ENCODE measurements at regions of chr1 and their contacts with region 1.

Region 1: DNA sequence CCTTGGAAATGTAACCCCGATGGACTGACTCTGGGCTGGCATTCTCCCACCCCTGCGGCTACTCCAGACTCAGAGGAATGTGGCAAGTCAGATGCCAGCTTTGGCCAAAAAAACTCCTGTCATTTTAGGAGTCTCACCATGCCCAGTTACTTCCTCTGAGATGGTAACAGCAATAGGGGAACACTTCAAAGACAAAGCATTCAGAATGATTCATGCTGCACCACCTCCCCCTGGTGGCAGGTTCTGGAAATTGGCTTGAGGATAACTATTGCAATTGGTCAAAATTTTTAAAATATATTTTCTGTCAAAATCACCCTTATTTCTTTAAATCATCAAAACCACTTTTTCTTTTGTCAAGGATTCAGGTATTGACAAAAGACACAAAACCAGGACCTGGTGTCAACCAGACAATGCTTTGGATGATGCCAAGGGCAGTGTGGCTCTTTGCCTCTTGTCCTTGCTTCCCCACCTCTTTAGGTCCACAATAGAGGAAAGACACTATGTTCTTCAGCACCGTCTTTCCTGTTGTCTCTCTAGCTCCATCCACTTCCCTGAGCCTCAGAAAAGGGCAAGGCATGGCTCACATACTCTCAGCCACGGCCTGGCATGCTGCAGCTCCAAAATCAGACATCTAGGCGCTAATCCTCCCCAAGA is 9.9 kb upstream of the CDCA8 start:
- DNase-seq: peak in 3 of 4 donors; percentile 51 to 72 (median 64)
- ATAC-seq: peak; percentile 93
- H3K4me3 ChIP-seq: no peak overlapping the region
- H3K27ac ChIP-seq: no peak overlapping the region
- H3K4me1 ChIP-seq: peaks cover 0 to 6% of the 10 kb centered on the region in 2 donors
- H3K27me3 ChIP-seq: no peaks in the 10 kb centered on the region
- CTCF ChIP-seq: peak; percentile 82 to 86

Region 2: DNA sequence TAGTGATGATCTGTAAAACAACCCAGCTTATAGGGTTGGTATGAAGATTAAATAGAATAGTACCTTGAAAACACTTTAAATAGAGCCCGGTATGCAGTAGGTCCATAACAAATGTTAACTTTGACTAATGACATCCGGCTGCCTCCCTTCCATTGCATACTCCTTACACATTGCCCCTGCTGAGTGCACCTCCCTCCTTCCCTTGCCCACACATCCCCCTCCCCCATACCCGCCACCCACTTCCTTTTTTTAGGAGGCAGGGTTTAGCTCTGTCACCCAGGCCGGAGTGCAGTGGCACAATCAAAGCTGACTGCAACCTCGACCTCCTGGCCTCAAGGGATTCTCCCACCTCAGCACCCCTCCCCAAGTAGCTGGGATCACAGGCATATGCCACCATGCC is 232.5 kb before region 1 on chr1:
- intact Hi-C with region 1: loop called in 1 of 2 experiments (anchors 10 kb)
- DNase-seq: peak in 1 of 4 donors; percentile 51
- ATAC-seq: peak; percentile 11
- H3K4me3 ChIP-seq: no peak overlapping the region
- H3K27ac ChIP-seq: no peak overlapping the region
- H3K4me1 ChIP-seq: peaks cover 0 to 4% of the 10 kb centered on the region in 2 donors
- H3K27me3 ChIP-seq: peaks cover 0 to 35% of the 10 kb centered on the region in 2 donors
- CTCF ChIP-seq: no peak

Region 3: GRCh38 chr1:37553598-37553926 is 128.9 kb before region 1 on chr1:
- intact Hi-C with region 1: no loop called
- DNase-seq: no peak
- ATAC-seq: no peak
- H3K4me3 ChIP-seq: peak overlapping the region; percentile 67 to 98
- H3K27ac ChIP-seq: peak overlapping the region; percentile 82 to 86
- H3K4me1 ChIP-seq: peaks cover 10 to 43% of the 10 kb centered on the region in 2 donors
- H3K27me3 ChIP-seq: no peaks in the 10 kb centered on the region
- CTCF ChIP-seq: no peak

Region 4: DNA sequence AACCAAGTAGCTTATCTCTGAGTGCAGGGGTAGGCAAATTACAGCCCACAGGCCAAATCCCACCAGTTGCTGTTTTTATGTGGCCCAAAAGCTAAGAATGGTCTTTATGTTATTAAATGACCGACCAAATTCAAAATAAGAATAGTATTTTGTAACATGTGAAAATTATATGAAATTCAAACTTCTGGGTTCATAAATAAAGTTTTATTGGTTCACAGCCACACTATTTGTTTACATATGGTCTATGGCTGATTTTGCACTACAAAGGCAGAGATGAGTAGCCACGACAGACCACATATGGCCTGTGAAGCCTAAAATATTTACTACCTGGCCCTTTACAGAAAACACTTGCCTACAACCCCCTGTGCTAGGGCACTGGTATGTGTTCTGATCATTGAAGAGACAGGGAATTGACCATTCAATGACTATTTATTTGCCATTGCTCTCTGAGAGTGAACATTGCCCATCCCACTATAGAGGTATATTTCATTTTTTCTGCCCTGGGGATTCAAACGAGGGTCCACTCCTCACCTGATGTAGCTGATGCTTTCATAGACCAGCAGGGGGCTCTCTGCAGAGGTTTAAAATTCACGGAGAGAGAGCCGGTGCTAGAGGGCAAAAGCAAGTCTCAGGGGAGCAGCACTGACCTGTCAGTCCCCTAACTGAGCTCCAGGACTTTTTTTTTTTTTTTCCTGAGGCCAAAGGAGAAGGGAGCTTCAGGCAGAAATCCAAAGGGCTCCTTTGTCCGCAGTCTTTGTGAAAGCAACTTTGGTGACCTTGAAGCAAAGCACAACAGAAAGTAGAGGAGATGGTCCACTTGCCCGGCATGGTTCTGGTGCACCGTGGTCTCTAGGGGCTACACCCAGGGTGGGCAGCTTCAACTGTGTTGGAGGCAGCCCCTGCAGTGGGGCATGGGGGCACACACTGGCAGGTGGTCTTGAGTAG is 79.4 kb before region 1 on chr1:
- intact Hi-C with region 1: loop called in 1 of 2 experiments (anchors 5 kb)
- DNase-seq: peak in 1 of 4 donors; percentile 28
- ATAC-seq: peak; percentile 74
- H3K4me3 ChIP-seq: no peak overlapping the region
- H3K27ac ChIP-seq: no peak overlapping the region
- H3K4me1 ChIP-seq: peaks cover 0 to 7% of the 10 kb centered on the region in 2 donors
- H3K27me3 ChIP-seq: peaks cover 0 to 7% of the 10 kb centered on the region in 2 donors
- CTCF ChIP-seq: peak; percentile 59 to 60